ENCODE measurements at regions of chr15 and their contacts with region 1.

Region 1: DNA sequence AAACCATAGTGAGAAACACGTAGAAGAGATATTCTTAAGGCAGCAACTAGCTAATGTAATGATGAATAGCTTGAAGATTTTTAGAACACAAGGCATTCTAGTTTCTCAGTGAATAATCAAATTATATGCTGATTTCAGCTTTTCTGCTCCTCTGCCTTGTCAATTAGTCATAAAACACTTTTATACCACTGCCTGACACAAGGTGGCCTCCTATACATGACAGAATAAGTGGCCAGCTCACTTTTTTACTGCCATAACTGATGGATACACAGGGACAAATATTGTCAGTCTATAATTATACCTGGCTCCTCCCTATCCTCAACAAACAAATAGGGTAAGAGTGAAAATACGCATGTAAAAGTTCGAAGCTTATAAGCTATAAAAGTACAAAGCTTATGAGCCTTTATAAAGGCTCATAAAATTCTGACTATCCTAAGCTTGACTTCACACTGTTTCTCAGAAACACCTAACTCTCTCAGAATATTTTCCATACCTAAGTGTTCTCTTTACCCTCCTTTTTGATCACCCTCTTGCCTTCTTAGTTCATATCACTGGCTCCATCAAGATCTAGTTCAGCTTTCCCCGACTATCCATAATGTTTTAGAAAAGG is 81.6 kb downstream of the HERC1 start:
- DNase-seq: peak; percentile 53
- H3K4me3 ChIP-seq: no peak overlapping the region
- H3K27ac ChIP-seq: no peak overlapping the region
- H3K4me1 ChIP-seq: no peaks in the 10 kb centered on the region
- H3K27me3 ChIP-seq: no peaks in the 10 kb centered on the region
- CTCF ChIP-seq: peak; percentile 59 to 63 (median 61)
- POLR2A ChIP-seq: no peak

Region 2: DNA sequence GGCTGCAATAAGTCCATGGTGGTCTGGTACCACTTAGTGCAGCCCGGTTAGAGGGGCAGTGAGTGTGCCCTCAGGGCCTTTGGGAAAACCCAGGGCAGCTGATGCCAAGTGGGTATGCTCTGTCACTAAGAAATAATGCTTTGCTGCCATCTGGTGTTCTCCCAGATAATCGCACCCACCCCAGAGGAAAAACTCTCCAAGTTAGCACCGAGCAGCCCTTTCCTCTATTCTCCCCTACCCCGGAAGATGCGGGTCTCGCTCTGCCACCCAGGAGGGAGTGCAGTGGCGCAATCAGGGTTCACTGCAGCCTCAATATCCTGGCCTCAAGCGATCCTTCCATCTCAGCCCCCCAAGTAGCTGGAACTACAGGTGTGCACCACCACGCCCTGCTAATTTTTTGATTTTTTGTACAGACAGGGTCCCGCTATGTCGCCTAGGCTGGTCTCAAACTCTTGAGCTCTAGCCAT is 315.4 kb after region 1 on chr15:
- intact Hi-C with region 1: loop called (anchors 5 kb)
- DNase-seq: peak; percentile 74
- H3K4me3 ChIP-seq: no peak overlapping the region
- H3K27ac ChIP-seq: no peak overlapping the region
- H3K4me1 ChIP-seq: peaks cover 25% of the 10 kb centered on the region
- H3K27me3 ChIP-seq: no peaks in the 10 kb centered on the region
- CTCF ChIP-seq: peak; percentile 58 to 84 (median 76)
- POLR2A ChIP-seq: no peak

Measured in testis (tissue), 5 donors.